ENCODE measurements at regions of chr7 and their contacts with region 1.

Region 1: DNA sequence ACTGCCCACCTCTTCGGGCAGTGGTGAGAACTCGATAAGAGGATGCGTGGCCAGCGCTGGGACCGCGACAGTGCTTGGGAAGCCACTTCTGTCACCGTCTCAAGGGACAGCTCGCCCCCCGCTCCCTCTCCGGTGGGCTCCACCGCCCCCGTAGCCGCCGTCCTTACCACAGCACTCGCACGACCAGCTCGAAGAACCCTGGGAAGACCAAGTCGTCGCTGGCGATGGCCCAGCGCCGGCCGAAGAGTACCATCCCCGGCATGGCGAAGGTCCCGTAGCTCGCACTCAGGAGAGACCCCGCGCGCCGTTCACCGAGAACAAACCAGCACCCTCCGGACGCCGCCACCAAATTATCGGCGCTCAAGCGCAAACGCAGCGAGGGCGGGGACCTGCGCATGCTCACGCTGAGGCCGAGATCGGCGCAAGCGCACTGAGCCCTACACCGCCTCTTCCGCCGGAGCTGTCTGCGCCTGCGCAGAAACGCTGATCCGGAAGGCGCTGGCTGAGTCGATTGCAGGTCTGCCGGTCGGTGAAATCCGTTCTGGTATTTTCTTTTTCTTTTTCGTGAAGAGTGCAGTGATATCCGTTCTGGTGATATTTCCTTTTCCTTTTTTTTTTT is at the start of gene DAGLB:
- DNase-seq: peak; percentile 50
- H3K4me3 ChIP-seq: peak within 1 kb of the TSS; percentile 100
- H3K27me3 ChIP-seq: no peaks in the 10 kb centered on the region
- CTCF ChIP-seq: no peak
- polyA plus RNA-seq, gene DAGLB: 32.7 and 40.5 TPM in 2 replicates

Region 2: DNA sequence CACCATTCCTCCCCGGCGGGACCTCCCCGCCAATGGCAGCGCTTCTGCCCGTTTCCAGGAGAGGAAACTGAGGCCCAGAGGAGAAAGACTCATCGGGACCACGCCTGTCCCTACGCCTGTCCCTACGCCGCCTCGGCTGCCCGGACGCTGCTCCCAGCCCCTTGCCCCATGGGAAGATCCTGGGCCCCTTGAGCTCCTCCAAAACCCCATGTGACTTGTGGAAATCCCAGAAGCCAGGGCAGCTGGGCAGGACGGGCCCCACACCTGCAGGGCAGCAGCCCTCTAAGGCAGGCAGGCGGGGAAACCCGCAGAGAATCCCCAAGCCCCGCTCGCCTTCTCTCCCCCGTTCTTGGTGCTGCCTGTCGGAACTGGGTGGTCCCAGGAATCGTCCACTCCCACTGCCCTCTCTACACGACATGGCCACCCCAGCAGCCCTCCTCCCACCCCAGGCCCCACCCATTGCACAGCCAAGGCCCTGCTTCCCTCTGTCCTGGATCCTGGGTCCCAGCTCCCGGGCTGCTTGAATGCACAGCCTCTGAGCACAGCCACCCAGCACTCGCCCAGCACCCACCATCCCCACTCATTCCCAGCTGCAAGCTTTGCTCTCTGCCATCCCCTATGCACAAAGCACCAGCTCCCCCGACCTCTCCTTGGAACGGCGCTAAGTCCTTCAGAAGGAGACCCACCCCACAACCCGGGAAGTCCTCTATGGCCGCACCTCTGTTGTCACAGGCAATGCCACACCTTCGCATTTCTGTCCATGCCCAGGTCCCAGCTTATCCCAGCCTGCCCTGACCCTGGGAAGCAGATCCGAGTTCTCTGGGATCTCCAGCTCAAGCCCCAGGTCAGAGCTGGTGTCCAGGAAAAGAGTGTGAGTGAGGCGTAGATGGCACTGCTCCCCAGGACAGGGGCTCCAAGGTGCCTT is 1114.3 kb before region 1 on chr7:
- CTCF ChIA-PET with region 1: no interaction called
- POLR2A ChIA-PET with region 1: no interaction called
- DNase-seq: no peak
- H3K4me3 ChIP-seq: no peak overlapping the region
- H3K27me3 ChIP-seq: no peaks in the 10 kb centered on the region
- CTCF ChIP-seq: no peak

Region 3: GRCh38 chr7:6209340-6209739 is 238.3 kb before region 1 on chr7:
- CTCF ChIA-PET with region 1: no interaction called
- POLR2A ChIA-PET with region 1: no interaction called
- DNase-seq: no peak
- H3K4me3 ChIP-seq: no peak overlapping the region
- H3K27me3 ChIP-seq: no peaks in the 10 kb centered on the region
- CTCF ChIP-seq: no peak

Region 4: GRCh38 chr7:6385110-6385971 is 62.3 kb before region 1 on chr7:
- CTCF ChIA-PET with region 1: no interaction called
- POLR2A ChIA-PET with region 1: interaction called, 15 read pairs
- DNase-seq: peak; percentile 85
- H3K4me3 ChIP-seq: no peak overlapping the region
- H3K27me3 ChIP-seq: no peaks in the 10 kb centered on the region
- CTCF ChIP-seq: no peak

Region 5: GRCh38 chr7:6435486-6436384 is 12.0 kb before region 1 on chr7:
- CTCF ChIA-PET with region 1: no interaction called
- POLR2A ChIA-PET with region 1: no interaction called
- DNase-seq: no peak
- H3K4me3 ChIP-seq: no peak overlapping the region
- H3K27me3 ChIP-seq: no peaks in the 10 kb centered on the region
- CTCF ChIP-seq: peak; percentile 98